ENCODE measurements at regions of chr7 and their contacts with region 1.

Region 1: GRCh38 chr7:139680676-139681462 is 96.9 kb downstream of the HIPK2 start:
- DNase-seq: peak; percentile 65
- H3K4me3 Mint-ChIP-seq: peak overlapping the region; percentile 74
- H3K27ac Mint-ChIP-seq: peak overlapping the region; percentile 85
- H3K4me1 Mint-ChIP-seq: peaks cover 61% of the 10 kb centered on the region
- H3K27me3 Mint-ChIP-seq: no peaks in the 10 kb centered on the region

Region 2: DNA sequence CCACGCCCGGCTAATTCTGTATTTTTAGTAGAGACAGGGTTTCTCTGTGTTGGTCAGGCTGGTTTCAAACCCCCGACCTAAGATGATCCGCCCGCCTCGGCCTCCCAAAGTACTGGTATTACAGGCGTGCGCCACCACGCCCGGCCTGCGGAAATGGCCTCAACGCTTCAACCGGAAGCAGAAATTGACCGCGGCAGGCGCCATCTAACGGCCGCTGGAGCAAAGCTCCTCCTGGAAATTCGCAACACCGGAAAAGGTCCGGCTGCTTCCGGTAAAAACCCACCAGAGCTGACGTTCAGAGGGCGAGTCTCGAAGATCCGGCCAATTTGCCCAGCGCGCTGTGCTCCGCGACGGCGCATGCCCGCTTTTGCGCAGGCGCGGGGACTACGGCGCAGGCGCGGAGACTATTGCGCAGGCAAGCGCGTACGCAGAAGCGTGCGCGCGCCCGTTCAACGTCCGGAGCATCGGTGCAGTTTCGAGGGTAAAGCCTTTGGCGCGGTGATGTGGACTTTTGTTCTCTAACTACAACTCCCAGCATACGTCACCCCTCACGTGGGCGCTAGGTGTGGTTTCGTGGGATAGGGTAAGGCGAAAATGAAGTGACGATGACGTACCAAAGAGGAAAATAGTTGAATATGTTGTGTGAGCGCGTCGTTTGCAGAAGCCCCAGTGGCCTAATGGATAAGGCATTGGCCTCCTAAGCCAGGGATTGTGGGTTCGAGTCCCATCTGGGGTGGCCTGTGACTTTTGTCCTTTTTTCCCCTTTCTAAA is 340.6 kb before region 1 on chr7:
- intact Hi-C with region 1: loop called (anchors 5 kb)
- DNase-seq: peak; percentile 97
- H3K4me3 Mint-ChIP-seq: peak overlapping the region; percentile 91
- H3K27ac Mint-ChIP-seq: peak overlapping the region; percentile 100
- H3K4me1 Mint-ChIP-seq: peaks cover 31% of the 10 kb centered on the region
- H3K27me3 Mint-ChIP-seq: peaks cover 8% of the 10 kb centered on the region

Region 3: DNA sequence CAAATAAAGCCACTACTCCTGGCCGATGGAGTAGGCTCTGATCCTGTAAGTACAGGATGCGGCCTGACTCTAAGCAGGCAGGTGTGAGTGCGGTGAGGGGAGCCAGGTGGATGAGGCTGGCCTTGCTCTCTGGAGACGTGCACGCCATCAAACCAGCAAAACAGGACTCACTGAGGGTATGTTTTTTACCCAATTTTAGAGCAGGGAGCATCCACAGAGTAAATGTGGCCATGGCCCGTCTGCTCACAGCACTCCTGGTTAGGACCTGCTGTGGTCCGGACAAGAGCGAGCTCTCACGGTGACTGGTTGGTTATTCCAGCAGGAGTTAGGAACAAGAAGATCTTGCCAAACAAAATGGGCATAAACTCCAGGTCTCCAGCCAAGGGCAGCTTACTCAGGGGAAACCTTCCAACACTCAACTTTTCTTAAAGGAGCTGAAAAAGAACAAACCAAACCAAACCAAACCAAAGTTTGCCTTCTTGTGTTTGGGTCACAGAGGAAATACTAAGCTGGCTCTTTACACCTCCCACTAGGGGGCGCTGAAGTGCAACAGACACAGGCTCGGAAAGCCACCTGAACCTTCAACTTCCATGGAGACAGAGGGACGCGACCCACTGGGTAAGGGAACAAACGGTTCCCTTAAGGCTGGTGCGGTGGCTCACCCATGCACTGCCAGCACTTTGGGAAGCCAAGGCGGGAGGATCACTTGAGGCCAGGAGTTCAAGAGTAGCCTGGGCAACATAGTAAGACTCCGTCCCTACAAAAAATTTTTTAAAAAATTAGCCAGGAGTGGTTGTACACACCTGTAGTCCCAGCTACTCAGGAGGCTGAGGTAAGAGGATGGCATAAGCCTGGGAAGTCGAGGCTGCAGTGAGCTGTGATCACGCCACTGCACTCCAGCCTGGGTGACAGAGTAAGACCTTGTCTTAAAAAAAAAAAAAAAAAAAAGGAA is 35.0 kb before region 1 on chr7:
- intact Hi-C with region 1: loop called (anchors 2 kb)
- DNase-seq: peak; percentile 68
- H3K4me3 Mint-ChIP-seq: no peak overlapping the region
- H3K27ac Mint-ChIP-seq: no peak overlapping the region
- H3K4me1 Mint-ChIP-seq: peaks cover 65% of the 10 kb centered on the region
- H3K27me3 Mint-ChIP-seq: peaks cover 1% of the 10 kb centered on the region

Region 4: DNA sequence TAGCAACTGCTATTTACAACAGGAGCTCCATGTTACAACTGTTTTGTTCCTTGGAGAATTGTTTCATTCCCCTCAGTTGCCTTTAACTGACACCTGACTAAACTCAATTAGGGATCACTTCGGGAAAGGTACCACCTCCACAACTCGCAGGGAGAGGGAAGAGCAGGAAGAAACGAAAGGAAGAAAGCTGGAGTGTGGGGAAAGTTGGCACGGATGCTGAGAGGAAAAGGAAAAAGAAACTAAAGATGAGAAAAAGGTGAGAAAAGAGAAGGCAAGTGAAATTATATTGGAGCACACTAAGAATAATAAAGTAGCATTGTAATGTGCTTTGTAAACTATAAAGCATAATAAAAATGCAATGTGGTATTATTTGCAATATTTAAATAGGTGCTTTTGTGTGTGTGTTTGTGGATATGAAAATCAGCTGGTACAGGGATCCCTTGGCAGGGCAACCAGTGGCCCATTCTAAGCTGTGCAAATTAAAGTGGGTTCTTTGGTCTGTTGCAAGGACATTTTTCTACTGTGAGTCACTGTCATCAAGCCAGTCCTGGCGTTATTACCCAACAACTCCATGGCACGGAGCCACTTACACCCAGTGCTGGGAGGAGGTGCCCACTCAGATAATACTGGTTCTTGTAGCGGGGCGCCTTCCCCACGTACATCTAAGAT is 51.1 kb after region 1 on chr7:
- intact Hi-C with region 1: loop called (anchors 1 kb)
- DNase-seq: no peak
- H3K4me3 Mint-ChIP-seq: peak overlapping the region; percentile 24
- H3K27ac Mint-ChIP-seq: peak overlapping the region; percentile 9
- H3K4me1 Mint-ChIP-seq: peaks cover 64% of the 10 kb centered on the region
- H3K27me3 Mint-ChIP-seq: peaks cover 1% of the 10 kb centered on the region

Region 5: GRCh38 chr7:139745678-139746143 is 64.8 kb after region 1 on chr7:
- intact Hi-C with region 1: no loop called
- DNase-seq: no peak
- H3K4me3 Mint-ChIP-seq: no peak overlapping the region
- H3K27ac Mint-ChIP-seq: no peak overlapping the region
- H3K4me1 Mint-ChIP-seq: peaks cover 30% of the 10 kb centered on the region
- H3K27me3 Mint-ChIP-seq: no peaks in the 10 kb centered on the region

Region 6: GRCh38 chr7:139936760-139937310 is 256.0 kb after region 1 on chr7:
- intact Hi-C with region 1: loop called (anchors 5 kb)
- DNase-seq: no peak
- H3K4me3 Mint-ChIP-seq: no peak overlapping the region
- H3K27ac Mint-ChIP-seq: peak overlapping the region; percentile 69
- H3K4me1 Mint-ChIP-seq: peaks cover 27% of the 10 kb centered on the region
- H3K27me3 Mint-ChIP-seq: peaks cover 8% of the 10 kb centered on the region

Region 7: DNA sequence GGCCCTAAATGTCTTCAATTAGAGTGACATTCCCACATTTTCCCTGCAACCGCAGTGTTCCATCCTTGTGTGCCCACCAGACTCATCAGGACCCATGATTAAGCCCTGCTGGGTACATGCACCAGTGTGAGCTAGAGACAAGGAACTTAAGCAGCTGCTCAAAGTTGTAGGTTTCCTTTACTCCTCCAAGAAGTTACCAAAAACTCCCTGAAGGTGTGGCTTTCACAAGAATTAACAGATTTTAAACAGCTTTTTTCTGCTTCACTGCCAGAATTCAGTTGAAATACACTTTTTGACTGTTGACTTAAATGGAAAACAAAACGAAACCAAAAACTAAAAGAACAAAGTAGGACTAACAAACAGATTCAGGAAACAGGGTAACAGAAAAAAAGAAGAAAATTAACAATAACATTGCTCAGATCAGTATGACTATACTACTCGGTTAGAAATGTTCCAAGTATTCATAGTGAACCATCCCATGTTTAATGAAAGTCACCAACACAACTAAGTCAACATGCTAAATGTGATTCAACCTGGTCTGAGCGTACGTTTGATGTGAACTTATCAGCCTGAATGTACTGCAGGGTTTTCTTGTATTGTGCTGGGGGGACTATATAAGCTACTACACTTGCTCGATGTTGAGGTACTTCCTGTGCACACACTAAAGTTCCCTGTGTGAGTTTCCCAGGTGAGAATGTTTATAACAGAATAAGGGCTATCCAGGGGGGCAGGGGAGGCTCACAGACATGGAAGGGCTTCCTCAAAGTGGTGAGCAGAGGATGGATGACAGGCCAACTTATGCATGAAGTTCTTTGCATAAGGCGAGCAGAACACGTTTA is 695.2 kb after region 1 on chr7:
- intact Hi-C with region 1: loop called (anchors 1 kb)
- DNase-seq: peak; percentile 47
- H3K4me3 Mint-ChIP-seq: peak overlapping the region; percentile 61
- H3K27ac Mint-ChIP-seq: peak overlapping the region; percentile 98
- H3K4me1 Mint-ChIP-seq: peaks cover 48% of the 10 kb centered on the region
- H3K27me3 Mint-ChIP-seq: no peaks in the 10 kb centered on the region